CD14-positive monocyte (primary cell): ENCODE measurements at regions of chr7 and their contacts with region 1.

Region 1: GRCh38 chr7:17109017-17109416 is 189.4 kb upstream of the AHR start:
- DNase-seq: no peak
- H3K4me3 ChIP-seq: no peak overlapping the region
- H3K4me3 Mint-ChIP-seq: no peak overlapping the region
- H3K27ac ChIP-seq: no peak overlapping the region
- H3K27ac Mint-ChIP-seq: no peak overlapping the region
- H3K4me1 ChIP-seq: no peaks in the 10 kb centered on the region
- H3K4me1 Mint-ChIP-seq: peaks cover 5% of the 10 kb centered on the region
- H3K27me3 ChIP-seq: no peaks in the 10 kb centered on the region
- H3K27me3 Mint-ChIP-seq: no peaks in the 10 kb centered on the region
- CTCF ChIP-seq: no peak

Region 2: DNA sequence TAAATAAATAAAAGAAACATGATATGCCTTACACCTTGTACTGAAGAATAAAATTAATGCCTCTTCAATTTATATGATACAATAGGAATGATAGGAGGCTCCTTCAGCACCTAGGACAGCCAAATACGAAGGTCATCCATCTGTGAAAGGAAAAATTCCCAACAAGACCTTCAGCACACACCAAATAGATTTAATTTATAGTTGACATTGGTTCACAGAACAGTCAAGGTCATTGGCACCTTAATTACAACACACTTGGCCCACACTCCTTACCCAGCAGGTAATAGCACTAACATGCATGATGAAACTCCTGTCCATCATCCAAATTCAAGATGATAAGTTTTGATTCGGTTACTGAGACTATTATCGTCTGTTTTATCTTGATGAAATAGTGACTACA is 580.4 kb after region 1 on chr7:
- intact Hi-C with region 1: loop called in 1 of 2 experiments (anchors 5 kb)
- DNase-seq: no peak
- H3K4me3 ChIP-seq: no peak overlapping the region
- H3K4me3 Mint-ChIP-seq: no peak overlapping the region
- H3K27ac ChIP-seq: no peak overlapping the region
- H3K27ac Mint-ChIP-seq: no peak overlapping the region
- H3K4me1 ChIP-seq: peaks cover 7 to 9% of the 10 kb centered on the region in 2 donors
- H3K4me1 Mint-ChIP-seq: peaks cover 7% of the 10 kb centered on the region
- H3K27me3 ChIP-seq: no peaks in the 10 kb centered on the region
- H3K27me3 Mint-ChIP-seq: peaks cover 0 to 2% (median 2%) of the 10 kb centered on the region in 3 donors
- CTCF ChIP-seq: no peak